ENCODE measurements at regions of chr2 and their contacts with region 1.

Region 1: DNA sequence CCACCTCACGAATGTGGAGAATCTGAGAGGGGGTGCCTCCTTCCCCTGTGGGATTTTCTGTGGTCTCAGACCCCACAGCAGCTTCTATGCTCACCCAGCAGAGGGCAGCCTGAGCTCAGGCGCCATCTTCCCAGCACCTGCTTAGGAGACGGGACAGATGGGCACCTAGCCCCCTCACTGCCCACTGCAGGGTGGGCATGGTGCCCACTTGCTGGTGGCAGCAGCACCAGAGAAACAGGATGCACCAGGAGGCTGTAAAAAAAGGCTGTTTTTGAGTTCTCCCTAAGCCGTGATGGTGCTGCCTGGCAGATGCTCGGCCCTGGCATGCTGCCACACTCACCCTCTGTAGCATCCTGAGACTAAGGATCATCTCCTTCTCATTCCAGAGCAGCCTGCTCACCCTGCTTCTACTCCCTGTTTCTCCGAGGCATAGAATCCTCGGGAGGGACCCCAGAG is 19.1 kb upstream of the SLC20A1 start:
- DNase-seq: peak in 2 of 3 donors; percentile 53 to 55
- H3K4me3 ChIP-seq: peak overlapping the region in 1 of 3 experiments; percentile 62
- H3K4me3 Mint-ChIP-seq: peak overlapping the region; percentile 59 to 71
- H3K27ac ChIP-seq: peak overlapping the region; percentile 70 to 89
- H3K27ac Mint-ChIP-seq: peak overlapping the region; percentile 79 to 96 (median 90)
- H3K4me1 ChIP-seq: peaks cover 79 to 91% of the 10 kb centered on the region in 2 donors
- H3K4me1 Mint-ChIP-seq: peaks cover 83% of the 10 kb centered on the region
- H3K27me3 ChIP-seq: no peaks in the 10 kb centered on the region
- H3K27me3 Mint-ChIP-seq: peaks cover 0 to 1% (median 0%) of the 10 kb centered on the region in 3 donors
- CTCF ChIP-seq: peak; percentile 85

Region 2: GRCh38 chr2:112645310-112646101 is 18.9 kb after region 1 on chr2 and contains the start of gene SLC20A1:
- intact Hi-C with region 1: loop called in 1 of 2 experiments (anchors 2 kb)
- DNase-seq: peak; percentile 92 to 97 (median 95)
- H3K4me3 ChIP-seq: peak within 1 kb of the TSS; percentile 76 to 99 (median 88)
- H3K4me3 Mint-ChIP-seq: peak within 1 kb of the TSS; percentile 89 to 95
- H3K27ac ChIP-seq: peak within 1 kb of the TSS; percentile 90 to 92
- H3K27ac Mint-ChIP-seq: peak within 1 kb of the TSS; percentile 87 to 95 (median 92)
- H3K4me1 ChIP-seq: peaks cover 41 to 55% of the 10 kb centered on the region in 2 donors
- H3K4me1 Mint-ChIP-seq: peaks cover 73% of the 10 kb centered on the region
- H3K27me3 ChIP-seq: no peaks in the 10 kb centered on the region
- H3K27me3 Mint-ChIP-seq: peaks cover 0 to 2% (median 0%) of the 10 kb centered on the region in 3 donors
- CTCF ChIP-seq: peak; percentile 26
- polyA plus RNA-seq, gene SLC20A1: 16.1 to 112 (median 36.3) TPM

Region 3: DNA sequence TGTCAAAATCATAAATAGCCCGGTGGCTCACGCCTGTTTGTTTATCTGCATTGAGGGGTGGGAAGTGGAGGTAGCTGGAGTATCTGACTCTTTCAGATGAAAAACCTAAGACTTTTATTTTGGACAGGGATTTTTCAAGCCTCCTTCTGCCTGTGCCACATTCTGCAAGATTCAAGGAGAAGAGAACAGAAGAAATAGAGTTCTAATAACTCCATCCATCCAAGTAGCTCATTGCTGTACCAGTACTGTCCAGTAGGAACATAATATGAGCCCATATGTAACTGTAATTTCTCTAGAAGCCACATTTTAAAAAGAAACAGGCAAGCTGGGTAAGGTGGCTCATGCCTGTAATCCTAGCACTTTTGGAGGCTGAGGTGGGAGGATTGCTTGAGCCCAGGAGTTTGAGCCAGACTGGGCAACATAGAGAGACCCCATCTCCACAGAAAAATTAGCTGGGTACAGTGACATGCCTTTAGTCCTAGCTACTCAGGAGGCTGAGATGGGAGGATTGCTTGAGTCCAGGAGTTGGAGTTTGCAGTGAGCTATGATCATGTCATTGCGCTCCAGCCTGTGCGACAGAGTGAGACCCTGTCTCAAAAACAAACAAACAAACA is 58.7 kb after region 1 on chr2:
- intact Hi-C with region 1: loop called in 1 of 2 experiments (anchors 5 kb)
- DNase-seq: no peak
- H3K4me3 ChIP-seq: no peak overlapping the region
- H3K4me3 Mint-ChIP-seq: no peak overlapping the region
- H3K27ac ChIP-seq: no peak overlapping the region
- H3K27ac Mint-ChIP-seq: peak overlapping the region in 1 of 7 donors; percentile 21
- H3K4me1 ChIP-seq: peaks cover 43 to 75% of the 10 kb centered on the region in 2 donors
- H3K4me1 Mint-ChIP-seq: peaks cover 59% of the 10 kb centered on the region
- H3K27me3 ChIP-seq: no peaks in the 10 kb centered on the region
- H3K27me3 Mint-ChIP-seq: peaks cover 0 to 1% (median 0%) of the 10 kb centered on the region in 3 donors
- CTCF ChIP-seq: peak; percentile 11